Heart left ventricle (tissue), 16 donors: ENCODE measurements at regions of chr6 and their contacts with region 1.

Region 1: DNA sequence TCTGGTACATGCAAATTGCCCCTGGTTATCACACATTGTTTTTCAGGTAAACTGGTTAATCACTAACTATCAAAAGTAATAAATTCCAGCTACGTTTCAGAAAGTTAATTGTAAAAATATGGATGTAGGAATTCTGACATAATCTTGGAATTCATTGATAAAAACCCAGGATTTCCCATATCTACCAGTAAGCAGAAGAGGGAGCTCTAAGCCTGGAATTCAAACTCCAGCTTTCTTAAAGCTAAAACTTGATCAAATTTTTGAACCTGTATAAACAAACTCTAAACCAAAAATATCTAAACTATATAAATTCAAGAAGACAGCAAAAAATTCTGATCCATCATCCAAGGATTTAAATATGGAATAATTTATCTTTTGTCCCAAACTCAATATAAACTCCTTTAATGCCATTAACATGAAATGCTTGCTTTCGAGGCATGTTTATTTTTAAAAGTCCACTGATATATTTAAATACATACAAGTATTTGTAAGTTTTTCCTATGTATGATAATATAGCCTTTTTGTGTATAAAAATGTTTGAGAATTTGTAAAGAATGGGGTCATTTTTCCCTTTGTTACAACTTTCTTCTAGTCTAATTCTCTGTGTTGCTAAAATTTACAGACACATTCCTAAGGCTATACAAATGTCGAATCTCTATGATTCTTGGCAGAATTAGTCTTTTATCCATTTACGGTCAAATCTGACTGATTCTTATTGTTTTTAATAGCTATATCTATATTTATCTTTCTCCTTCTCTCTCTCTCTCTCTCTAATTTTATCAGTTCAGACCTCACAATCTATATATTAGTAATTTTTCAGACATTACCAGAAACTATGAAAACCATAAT is 91.4 kb upstream of the RNF217 start:
- DNase-seq: no peak
- ATAC-seq: no peak
- H3K4me3 ChIP-seq: no peak overlapping the region
- H3K27ac ChIP-seq: no peak overlapping the region
- H3K4me1 ChIP-seq: no peaks in the 10 kb centered on the region
- H3K27me3 ChIP-seq: no peaks in the 10 kb centered on the region
- CTCF ChIP-seq: peak; percentile 46 to 89 (median 76)
- POLR2A ChIP-seq: no peak

Region 2: GRCh38 chr6:124977067-124977908 is 106.5 kb after region 1 on chr6:
- intact Hi-C with region 1: no loop called
- DNase-seq: no peak
- ATAC-seq: no peak
- H3K4me3 ChIP-seq: no peak overlapping the region
- H3K27ac ChIP-seq: no peak overlapping the region
- H3K4me1 ChIP-seq: no peaks in the 10 kb centered on the region
- H3K27me3 ChIP-seq: no peaks in the 10 kb centered on the region
- CTCF ChIP-seq: no peak
- POLR2A ChIP-seq: no peak

Region 3: DNA sequence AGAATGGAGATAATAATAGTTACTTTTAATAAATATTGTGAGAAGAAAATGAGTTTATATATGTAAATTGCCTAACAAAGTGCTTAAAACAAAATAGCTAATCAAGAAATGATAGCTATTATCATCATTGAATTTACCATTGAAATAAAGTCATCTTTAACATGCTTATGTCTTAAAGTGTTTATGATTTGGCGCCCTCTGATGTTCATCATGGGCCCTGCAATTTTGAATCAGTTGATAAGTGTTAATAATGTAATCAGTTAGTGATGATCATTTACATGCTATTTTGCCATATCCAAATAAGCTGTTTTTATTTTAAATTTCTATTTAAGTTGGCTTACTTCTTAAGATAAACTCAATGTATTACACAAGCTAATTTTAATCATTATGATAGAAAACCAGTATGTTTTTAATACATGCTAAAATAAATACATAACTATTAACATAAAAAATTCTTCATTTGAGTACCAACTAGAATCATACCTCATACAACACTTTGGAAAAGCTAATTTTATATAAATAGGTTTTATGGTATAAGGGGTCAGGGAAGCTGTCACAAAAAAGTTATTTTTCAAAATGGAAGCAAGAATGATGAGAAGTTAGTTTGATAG is 243.5 kb after region 1 on chr6:
- intact Hi-C with region 1: loop called (anchors 1 to 2 kb)
- DNase-seq: peak in 1 of 5 donors; percentile 44
- ATAC-seq: peak in 1 of 4 donors; percentile 48
- H3K4me3 ChIP-seq: no peak overlapping the region
- H3K27ac ChIP-seq: no peak overlapping the region
- H3K4me1 ChIP-seq: no peaks in the 10 kb centered on the region
- H3K27me3 ChIP-seq: no peaks in the 10 kb centered on the region
- CTCF ChIP-seq: peak; percentile 78 to 95 (median 88)
- POLR2A ChIP-seq: no peak

Region 4: GRCh38 chr6:125294925-125295324 is 424.1 kb after region 1 on chr6:
- intact Hi-C with region 1: loop called in 2 of 10 experiments (anchors 10 kb)
- DNase-seq: peak in 2 of 5 donors; percentile 37 to 53
- ATAC-seq: peak; percentile 82 to 89 (median 86)
- H3K4me3 ChIP-seq: no peak overlapping the region
- H3K27ac ChIP-seq: peak overlapping the region in 10 of 12 donors; percentile 40 to 71 (median 60)
- H3K4me1 ChIP-seq: peaks cover 0 to 53% (median 27%) of the 10 kb centered on the region in 12 donors
- H3K27me3 ChIP-seq: no peaks in the 10 kb centered on the region
- CTCF ChIP-seq: no peak
- POLR2A ChIP-seq: no peak

Region 5: GRCh38 chr6:125301435-125302391 is 430.9 kb after region 1 on chr6 and contains the start of gene HDDC2:
- intact Hi-C with region 1: loop called in 2 of 10 experiments (anchors 10 kb)
- DNase-seq: peak; percentile 84 to 91 (median 87)
- ATAC-seq: peak; percentile 65 to 93 (median 92)
- H3K4me3 ChIP-seq: peak within 1 kb of the TSS; percentile 46 to 84 (median 74)
- H3K27ac ChIP-seq: peak within 1 kb of the TSS; percentile 83 to 97 (median 92)
- H3K4me1 ChIP-seq: peaks cover 0 to 31% (median 21%) of the 10 kb centered on the region in 12 donors
- H3K27me3 ChIP-seq: no peaks in the 10 kb centered on the region
- CTCF ChIP-seq: no peak
- POLR2A ChIP-seq: peak in 1 of 2 donors; percentile 65
- total RNA-seq, gene HDDC2: 70.2 to 123 (median 92.6) TPM

Region 6: GRCh38 chr6:125764121-125764671 is 893.4 kb after region 1 on chr6:
- intact Hi-C with region 1: loop called in 3 of 10 experiments (anchors 5 to 10 kb)
- DNase-seq: no peak
- ATAC-seq: no peak
- H3K4me3 ChIP-seq: no peak overlapping the region
- H3K27ac ChIP-seq: peak overlapping the region in 4 of 12 donors; percentile 1 to 26 (median 16)
- H3K4me1 ChIP-seq: peaks cover 0 to 49% (median 4%) of the 10 kb centered on the region in 12 donors
- H3K27me3 ChIP-seq: peaks cover 0 to 7% (median 0%) of the 10 kb centered on the region in 9 donors
- CTCF ChIP-seq: no peak
- POLR2A ChIP-seq: no peak